Calu3 (cell line): ENCODE measurements at regions of chr15 and their contacts with region 1.

Region 1: GRCh38 chr15:65286704-65287519 is at the start of gene PARP16:
- DNase-seq: peak; percentile 97
- H3K4me3 Mint-ChIP-seq: peak within 1 kb of the TSS; percentile 96
- H3K27ac Mint-ChIP-seq: peak within 1 kb of the TSS; percentile 36
- H3K4me1 Mint-ChIP-seq: peaks cover 6% of the 10 kb centered on the region
- H3K27me3 Mint-ChIP-seq: no peaks in the 10 kb centered on the region
- CTCF ChIP-seq: peak; percentile 33
- total RNA-seq, gene PARP16: 4.6 and 5.8 TPM in 2 replicates

Region 2: DNA sequence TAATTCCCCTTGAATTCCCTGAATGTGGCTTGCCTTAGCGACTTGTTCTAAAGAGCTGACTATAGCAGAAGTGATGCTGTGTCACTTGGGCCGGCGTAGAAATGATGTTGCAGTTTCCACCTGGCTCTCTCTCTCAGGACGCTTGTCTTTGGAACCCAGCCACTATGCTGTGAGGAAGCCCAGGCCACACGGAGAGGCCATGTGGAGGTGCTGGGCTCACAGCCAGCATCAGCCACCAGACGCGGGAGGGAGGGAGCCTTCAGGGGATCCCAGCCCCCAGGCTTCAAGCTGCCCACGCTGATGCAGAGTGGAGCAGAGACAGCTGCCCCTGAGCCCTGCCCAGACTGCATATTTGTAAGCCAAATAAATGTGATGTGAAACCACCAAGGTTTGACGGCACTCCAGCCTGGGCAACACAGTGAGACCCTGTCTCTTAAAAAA is 36.2 kb after region 1 on chr15:
- CTCF ChIA-PET with region 1: no interaction called
- intact Hi-C with region 1: no loop called
- DNase-seq: no peak
- H3K4me3 Mint-ChIP-seq: no peak overlapping the region
- H3K27ac Mint-ChIP-seq: no peak overlapping the region
- H3K4me1 Mint-ChIP-seq: no peaks in the 10 kb centered on the region
- H3K27me3 Mint-ChIP-seq: peaks cover 38% of the 10 kb centered on the region
- CTCF ChIP-seq: no peak

Region 3: DNA sequence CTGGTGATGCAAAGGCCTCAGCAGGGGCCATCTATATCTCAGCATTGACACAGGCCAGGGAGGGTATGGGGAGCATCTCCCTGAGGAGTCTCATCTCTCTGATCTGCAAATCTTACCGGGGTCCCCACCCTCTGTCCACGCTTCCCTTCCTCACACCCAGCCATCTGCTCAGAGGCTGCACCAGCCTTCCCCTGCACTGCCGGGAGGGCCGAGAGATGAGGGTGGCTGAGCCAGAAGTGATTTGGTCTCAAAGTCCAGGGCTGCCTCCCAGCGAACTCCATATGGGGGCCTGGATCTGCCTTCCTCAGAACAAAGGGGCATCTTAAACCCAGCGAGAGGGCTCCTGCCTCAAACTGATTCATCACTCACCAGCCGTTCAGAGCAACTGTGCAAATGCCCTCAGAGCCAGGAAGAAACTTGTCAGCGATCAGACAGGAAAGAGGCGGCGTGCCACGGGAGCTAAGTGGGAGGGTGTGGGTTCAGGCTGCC is 86.3 kb after region 1 on chr15:
- CTCF ChIA-PET with region 1: interaction called, 10 read pairs
- intact Hi-C with region 1: no loop called
- DNase-seq: no peak
- H3K4me3 Mint-ChIP-seq: no peak overlapping the region
- H3K27ac Mint-ChIP-seq: no peak overlapping the region
- H3K4me1 Mint-ChIP-seq: peaks cover 9% of the 10 kb centered on the region
- H3K27me3 Mint-ChIP-seq: peaks cover 79% of the 10 kb centered on the region
- CTCF ChIP-seq: no peak